HAP-1 (cell line): ENCODE measurements at regions of chr15 and their contacts with region 1.

Region 1: DNA sequence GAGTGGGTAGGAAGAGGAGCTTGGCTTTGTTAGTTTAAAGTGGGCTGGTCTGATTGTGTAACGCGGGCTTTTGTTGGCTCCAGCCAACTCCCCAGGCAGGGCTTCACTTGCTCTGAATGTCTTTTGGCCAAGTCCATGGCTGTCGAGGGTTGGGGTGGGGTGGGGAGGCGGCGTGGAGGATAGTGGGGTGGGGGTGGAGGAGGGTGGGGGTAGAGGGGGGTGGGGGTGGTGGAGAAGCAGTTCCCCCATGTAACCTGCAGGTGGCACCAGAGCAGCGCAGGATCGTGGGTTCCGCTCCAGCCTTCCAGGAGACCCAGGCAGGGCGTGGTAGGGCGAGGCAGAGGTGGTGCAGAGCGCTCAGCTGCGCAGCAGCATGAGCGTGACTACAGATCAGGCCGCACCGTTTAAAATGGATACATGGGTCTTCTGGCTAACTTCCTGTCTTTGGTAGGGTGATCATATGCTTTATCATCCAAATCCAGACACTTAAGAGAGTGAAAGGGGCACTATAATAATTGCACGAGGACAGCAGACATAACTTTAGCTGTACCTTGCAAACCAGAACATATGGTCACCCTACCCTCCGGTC is 28.3 kb downstream of the GOLGA6A start:
- DNase-seq: peak; percentile 91 to 97
- H3K4me3 ChIP-seq: no peak overlapping the region
- H3K4me1 ChIP-seq: peaks cover 13% of the 10 kb centered on the region
- H3K27me3 ChIP-seq: no peaks in the 10 kb centered on the region

Region 2: GRCh38 chr15:72312605-72313447 is 1741.2 kb before region 1 on chr15:
- in situ Hi-C with region 1: loop called (anchors 10 kb)
- DNase-seq: peak; percentile 89
- H3K4me3 ChIP-seq: no peak overlapping the region
- H3K4me1 ChIP-seq: no peaks in the 10 kb centered on the region
- H3K27me3 ChIP-seq: peaks cover 15% of the 10 kb centered on the region; the same call in 1 of the 2 replicates

Region 3: GRCh38 chr15:74011610-74012009 is 42.4 kb before region 1 on chr15:
- in situ Hi-C with region 1: no loop called
- DNase-seq: no peak
- H3K4me3 ChIP-seq: no peak overlapping the region
- H3K4me1 ChIP-seq: no peaks in the 10 kb centered on the region
- H3K27me3 ChIP-seq: no peaks in the 10 kb centered on the region

Region 4: DNA sequence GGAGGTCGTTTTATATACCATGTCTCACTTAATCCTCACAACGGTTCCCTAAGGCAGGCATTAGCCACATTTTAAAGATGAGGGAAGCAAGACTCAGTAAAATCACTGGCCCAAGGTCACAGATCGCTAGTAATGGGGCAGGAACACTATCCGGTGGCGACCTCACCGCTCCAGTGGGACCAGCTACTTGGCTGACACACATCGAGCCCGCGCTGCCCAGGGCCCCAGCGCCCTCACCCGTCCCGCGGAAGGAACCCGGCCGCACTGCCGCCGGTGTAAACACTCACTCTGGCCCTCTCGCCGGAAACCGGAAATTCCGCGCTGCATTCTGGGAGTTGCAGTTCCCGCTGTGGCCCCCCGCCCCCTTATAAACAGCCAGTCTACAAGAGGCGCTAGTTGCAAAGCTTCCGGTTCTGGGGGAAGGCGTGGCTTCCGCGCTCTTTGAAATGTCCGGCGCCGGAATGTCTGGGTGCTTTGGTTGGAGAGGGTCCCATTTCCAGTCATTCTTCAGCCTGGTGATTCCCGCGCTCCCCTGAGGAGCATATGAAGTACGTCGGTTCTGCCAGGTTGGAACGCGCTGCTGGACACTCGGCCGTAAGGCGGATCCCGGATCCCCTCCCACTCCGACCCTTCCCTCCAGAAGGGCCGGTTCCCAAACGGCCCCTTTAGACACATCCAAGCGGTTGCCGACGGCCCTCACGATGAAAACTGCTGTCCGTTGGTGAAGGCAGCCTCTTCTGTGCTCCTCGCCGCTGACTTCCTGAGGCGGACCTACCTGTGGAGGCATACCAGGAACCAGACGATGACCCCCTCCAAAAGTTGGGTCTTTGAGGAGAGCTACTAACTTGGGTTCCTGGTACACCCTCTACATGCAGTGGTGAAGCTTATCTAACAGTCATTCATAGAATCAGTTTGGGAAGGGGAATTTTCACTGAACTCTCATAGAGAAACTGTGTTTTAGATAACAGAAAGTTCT is 407.1 kb after region 1 on chr15 and contains the start of gene UBL7:
- in situ Hi-C with region 1: no loop called
- DNase-seq: peak; percentile 100
- H3K4me3 ChIP-seq: peak within 1 kb of the TSS; percentile 54
- H3K4me1 ChIP-seq: peaks cover 17% of the 10 kb centered on the region
- H3K27me3 ChIP-seq: no peaks in the 10 kb centered on the region